ENCODE measurements at regions of chr16 and their contacts with region 1.

Region 1: DNA sequence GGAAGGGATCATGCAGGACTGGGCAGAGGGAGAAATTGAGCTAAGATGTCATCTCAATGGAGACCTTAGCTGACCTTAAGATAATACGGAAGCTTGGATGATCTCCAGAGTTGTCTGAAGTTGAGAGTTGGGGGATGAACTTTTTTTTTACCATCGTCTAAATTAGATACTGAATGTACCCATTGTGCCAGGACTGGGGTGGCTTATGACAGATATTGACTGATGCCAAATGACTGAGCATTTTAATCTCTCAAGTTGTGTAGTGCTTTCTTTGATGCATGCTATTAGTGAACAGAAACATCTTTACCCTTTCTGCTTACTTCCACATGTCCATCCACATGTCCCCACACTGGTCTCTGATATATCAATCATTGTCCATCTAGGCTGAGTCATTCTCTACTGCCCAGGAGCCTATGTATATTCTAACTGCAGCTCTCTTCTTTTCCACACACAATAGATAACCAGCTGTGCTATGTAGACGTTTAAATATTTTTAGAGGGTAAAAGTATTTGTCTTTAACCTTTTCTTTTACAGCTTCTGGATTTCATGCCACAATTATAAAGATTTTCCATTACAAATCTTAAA is 60.2 kb upstream of the ZKSCAN2 start:
- DNase-seq: no peak

Region 2: GRCh38 chr16:24626256-24626655 is 691.6 kb before region 1 on chr16:
- intact Hi-C with region 1: loop called in 1 of 2 experiments (anchors 5 kb)
- DNase-seq: no peak

Region 3: GRCh38 chr16:25210758-25211157 is 107.1 kb before region 1 on chr16:
- intact Hi-C with region 1: no loop called
- DNase-seq: no peak

Region 4: DNA sequence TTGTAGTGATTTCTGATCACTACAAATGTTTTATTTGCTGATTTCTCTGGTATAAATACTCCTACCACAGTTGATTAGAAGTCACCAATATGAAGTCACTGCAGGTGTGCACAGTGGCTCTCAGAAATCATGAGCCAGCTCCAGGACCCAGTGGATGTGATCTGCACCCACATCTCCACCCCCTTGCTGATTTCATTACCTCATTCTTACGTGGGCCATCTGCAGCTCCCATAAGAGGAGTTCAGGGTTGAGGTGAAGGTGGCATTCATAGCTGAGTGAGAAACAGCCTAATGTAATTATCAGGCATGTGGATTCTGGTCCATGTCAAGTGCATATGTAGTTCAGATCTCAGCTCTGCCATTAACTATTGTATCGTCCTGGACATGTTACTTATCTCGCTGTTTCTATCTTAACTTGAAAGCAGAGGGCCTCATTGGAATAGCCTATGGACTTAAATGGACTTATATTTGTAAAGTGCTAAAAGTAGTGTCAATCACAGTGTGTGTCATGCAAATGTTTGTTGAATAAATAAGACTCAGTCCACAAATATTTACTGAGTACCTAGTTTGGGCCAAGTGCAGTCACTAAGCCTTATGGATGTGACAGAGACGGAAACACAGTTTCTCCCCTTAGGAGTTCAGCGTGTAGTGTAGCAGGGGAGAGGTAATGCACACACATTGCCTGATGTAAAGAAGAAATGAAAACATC is 19.5 kb before region 1 on chr16:
- intact Hi-C with region 1: loop called in 1 of 2 experiments (anchors 2 kb)
- DNase-seq: no peak